PC-3 (cell line): ENCODE measurements at regions of chr6 and their contacts with region 1.

Region 1: DNA sequence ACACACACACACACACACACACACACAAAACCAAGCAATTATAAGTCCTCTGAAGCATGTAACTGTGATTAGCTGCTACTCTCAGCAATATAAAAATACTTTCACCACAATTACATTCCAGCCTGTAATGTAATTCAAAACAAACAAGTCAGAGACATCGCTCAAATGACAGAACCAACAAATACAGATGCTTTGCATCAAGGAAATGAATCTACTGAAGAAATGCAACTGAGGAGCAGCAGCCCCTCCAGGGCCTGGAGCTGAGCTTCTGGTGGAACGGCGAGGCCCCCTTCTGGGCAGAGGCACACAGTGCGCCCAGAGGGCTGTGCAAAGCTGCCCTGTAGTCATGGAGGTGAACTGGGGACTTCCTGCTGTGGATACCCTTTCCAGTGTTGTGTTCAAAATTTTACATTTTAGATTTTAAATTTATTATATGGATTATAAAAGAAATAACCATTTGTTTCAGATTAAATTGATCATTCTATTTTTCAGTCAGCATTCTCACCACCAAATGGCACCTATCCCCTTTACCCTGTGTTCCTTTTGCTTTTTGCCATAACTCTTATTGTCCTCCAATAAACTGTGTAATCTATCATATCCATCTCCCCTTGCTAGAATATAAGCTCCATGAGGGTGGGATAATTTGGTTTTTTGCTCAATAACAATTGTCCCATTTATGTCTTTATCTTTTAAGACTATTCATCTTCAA is 23.2 kb downstream of the ADAT2 start:
- DNase-seq: peak; percentile 82
- ATAC-seq: peak; percentile 99
- H3K4me3 ChIP-seq: no peak overlapping the region
- H3K27ac ChIP-seq: peak overlapping the region; percentile 31
- H3K4me1 ChIP-seq: peaks cover 6% of the 10 kb centered on the region
- H3K27me3 ChIP-seq: no peaks in the 10 kb centered on the region
- CTCF ChIP-seq: peak; percentile 93

Region 2: GRCh38 chr6:142568857-142569597 is 858.2 kb before region 1 on chr6:
- CTCF ChIA-PET with region 1: no interaction called
- POLR2A ChIA-PET with region 1: interaction called, 13 read pairs
- intact Hi-C with region 1: no loop called
- DNase-seq: no peak
- ATAC-seq: no peak
- H3K4me3 ChIP-seq: no peak overlapping the region
- H3K27ac ChIP-seq: no peak overlapping the region
- H3K4me1 ChIP-seq: peaks cover 4% of the 10 kb centered on the region; the same call in 1 of the 2 replicates
- H3K27me3 ChIP-seq: no peaks in the 10 kb centered on the region
- CTCF ChIP-seq: no peak

Region 3: DNA sequence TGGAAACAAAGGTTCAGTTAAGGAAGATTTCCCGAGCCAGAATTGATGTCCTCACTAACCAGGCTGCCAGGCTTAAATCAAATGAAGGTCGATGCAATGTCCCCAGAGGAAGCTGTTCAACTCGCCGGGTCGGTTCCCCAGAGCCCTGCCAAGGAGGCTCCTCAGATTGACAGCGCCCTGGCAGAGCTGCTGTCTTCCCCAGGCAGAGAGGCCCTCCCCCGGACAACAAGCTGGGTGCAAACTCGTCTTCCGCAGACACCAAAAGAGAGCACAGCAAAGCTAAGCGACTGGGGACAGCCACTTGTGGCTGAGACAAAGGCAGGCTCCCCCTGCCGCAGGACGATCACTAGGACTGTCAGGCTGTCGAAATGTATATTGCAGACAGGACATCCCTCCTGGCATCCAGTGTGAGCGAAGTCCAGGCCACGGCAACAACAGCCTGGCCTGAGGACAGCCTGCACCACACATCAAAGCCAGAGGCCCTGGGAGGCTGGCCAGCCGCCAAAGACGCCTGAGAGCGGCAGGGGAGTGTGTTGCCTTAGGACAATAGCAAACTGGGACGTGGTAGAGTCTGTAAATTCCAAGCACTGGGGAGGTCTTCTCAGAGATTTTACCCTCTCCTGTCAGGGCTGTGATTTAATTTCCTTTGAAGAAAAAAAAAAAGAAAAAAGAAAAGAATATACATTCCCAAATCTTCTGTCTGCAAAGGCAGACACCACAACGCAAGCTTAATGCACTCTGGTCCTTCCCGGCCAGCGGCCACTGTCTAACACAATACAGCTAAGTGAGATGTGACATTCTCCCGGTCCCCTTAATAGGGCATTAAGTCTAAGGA is 581.4 kb before region 1 on chr6:
- CTCF ChIA-PET with region 1: no interaction called
- POLR2A ChIA-PET with region 1: no interaction called
- intact Hi-C with region 1: loop called (anchors 5 kb)
- DNase-seq: peak; percentile 80
- ATAC-seq: peak; percentile 52
- H3K4me3 ChIP-seq: peak overlapping the region; percentile 64
- H3K27ac ChIP-seq: peak overlapping the region; percentile 98
- H3K4me1 ChIP-seq: peaks cover 72% of the 10 kb centered on the region
- H3K27me3 ChIP-seq: no peaks in the 10 kb centered on the region
- CTCF ChIP-seq: no peak

Region 4: GRCh38 chr6:143060354-143060805 is 366.9 kb before region 1 on chr6:
- CTCF ChIA-PET with region 1: no interaction called
- POLR2A ChIA-PET with region 1: no interaction called
- intact Hi-C with region 1: loop called (anchors 5 kb)
- DNase-seq: peak; percentile 67
- ATAC-seq: peak; percentile 73
- H3K4me3 ChIP-seq: peak overlapping the region; percentile 90
- H3K27ac ChIP-seq: peak overlapping the region; percentile 89
- H3K4me1 ChIP-seq: peaks cover 22% of the 10 kb centered on the region
- H3K27me3 ChIP-seq: no peaks in the 10 kb centered on the region
- CTCF ChIP-seq: peak; percentile 20; the same call in 1 of the 2 replicates

Region 5: GRCh38 chr6:143271024-143271423 is 156.2 kb before region 1 on chr6:
- CTCF ChIA-PET with region 1: no interaction called
- POLR2A ChIA-PET with region 1: no interaction called
- intact Hi-C with region 1: loop called (anchors 5 kb)
- DNase-seq: peak; percentile 78
- ATAC-seq: peak; percentile 90
- H3K4me3 ChIP-seq: no peak overlapping the region
- H3K27ac ChIP-seq: no peak overlapping the region
- H3K4me1 ChIP-seq: peaks cover 12% of the 10 kb centered on the region
- H3K27me3 ChIP-seq: no peaks in the 10 kb centered on the region
- CTCF ChIP-seq: no peak

Region 6: DNA sequence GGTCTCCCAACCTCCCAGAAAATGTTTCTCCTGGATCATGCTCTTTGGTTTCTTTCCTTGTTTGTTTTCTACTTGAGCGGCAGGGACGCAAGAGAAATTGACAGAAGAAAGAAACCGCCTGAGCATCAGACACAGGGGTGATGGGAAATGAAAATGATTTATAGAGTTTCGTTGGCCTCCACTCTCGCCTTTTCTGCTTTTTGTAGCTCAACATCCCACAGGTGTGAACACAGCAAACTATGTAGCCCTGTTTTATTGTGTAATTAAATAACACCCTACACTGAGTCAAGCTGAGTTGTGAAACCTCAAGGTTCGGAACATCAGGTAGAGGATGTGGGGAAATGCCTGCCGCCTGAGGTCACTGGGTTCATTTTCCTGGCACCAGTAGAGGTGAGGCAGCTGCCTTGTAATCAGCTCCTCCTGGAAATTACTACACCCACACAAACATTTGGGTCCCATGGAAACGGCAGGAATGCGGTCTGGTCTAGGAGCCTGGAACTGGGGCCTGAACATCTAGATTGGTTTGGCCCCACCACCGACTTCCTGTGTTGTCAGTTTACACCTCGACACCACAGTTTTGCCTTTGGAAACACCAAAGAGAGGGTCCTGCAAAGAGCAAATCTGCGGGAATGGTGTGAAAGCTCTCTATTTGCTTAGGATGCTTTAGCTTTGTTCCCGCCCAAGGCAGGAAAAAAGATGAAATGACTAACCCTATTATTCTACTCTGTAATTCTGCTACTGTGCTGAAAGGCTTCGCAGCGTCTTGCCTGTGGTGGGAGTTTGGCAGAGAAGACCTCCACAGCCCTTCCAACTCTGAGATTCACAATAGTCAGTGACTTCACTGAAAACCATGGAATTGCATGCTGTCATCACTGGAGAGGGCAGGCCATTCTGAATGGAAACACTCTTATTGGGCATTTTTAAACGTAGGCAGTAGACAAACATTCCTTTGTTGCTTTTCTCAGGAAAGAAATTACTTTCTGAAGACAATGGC is 29.7 kb before region 1 on chr6:
- CTCF ChIA-PET with region 1: interaction called, 3 read pairs
- POLR2A ChIA-PET with region 1: no interaction called
- intact Hi-C with region 1: loop called (anchors 2 kb)
- DNase-seq: peak; percentile 92
- ATAC-seq: peak; percentile 79
- H3K4me3 ChIP-seq: peak overlapping the region; percentile 47
- H3K27ac ChIP-seq: peak overlapping the region; percentile 95
- H3K4me1 ChIP-seq: peaks cover 49% of the 10 kb centered on the region
- H3K27me3 ChIP-seq: no peaks in the 10 kb centered on the region
- CTCF ChIP-seq: no peak